ENCODE measurements at regions of chr2 and their contacts with region 1.

Region 1: GRCh38 chr2:99337113-99338028 is at the start of gene EIF5B:
- H3K4me3 ChIP-seq: peak within 1 kb of the TSS; percentile 87
- H3K27ac ChIP-seq: peak within 1 kb of the TSS; percentile 78
- H3K4me1 ChIP-seq: peaks cover 9% of the 10 kb centered on the region
- CTCF ChIP-seq: peak; percentile 90

Region 2: GRCh38 chr2:99154643-99155536 is 182.5 kb before region 1 on chr2 and contains the starts of genes LIPT1 and TSGA10:
- CTCF ChIA-PET with region 1: interaction called, 4 read pairs
- POLR2A ChIA-PET with region 1: interaction called, 12 read pairs
- H3K4me3 ChIP-seq: peak within 1 kb of the TSS; percentile 63
- H3K27ac ChIP-seq: peak within 1 kb of the TSS; percentile 71
- H3K4me1 ChIP-seq: peaks cover 3% of the 10 kb centered on the region; the same call in 1 of the 2 replicates
- CTCF ChIP-seq: peak; percentile 79

Region 3: DNA sequence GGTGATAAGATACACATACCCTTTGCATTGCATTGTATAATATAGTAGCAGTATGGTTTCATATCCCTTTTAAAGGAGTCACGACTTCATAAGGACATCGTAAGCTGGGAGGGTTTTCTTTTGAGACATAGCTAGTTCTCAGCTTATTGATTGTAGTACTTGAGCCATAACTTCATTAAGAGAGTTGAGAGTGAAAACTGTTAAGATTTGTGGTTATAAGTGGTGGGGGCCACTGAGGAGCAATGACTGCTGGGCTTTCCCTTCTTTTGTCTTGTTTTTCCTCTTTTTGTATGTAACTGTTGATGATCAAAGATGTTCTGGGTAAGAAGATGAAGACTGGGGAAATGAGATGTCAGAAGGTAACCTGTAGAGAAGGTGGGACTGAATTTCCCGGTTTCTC is 10.8 kb after region 1 on chr2:
- CTCF ChIA-PET with region 1: interaction called, 5 read pairs
- POLR2A ChIA-PET with region 1: interaction called, 10 read pairs
- H3K4me3 ChIP-seq: no peak overlapping the region
- H3K27ac ChIP-seq: no peak overlapping the region
- H3K4me1 ChIP-seq: no peaks in the 10 kb centered on the region
- CTCF ChIP-seq: no peak

Region 4: DNA sequence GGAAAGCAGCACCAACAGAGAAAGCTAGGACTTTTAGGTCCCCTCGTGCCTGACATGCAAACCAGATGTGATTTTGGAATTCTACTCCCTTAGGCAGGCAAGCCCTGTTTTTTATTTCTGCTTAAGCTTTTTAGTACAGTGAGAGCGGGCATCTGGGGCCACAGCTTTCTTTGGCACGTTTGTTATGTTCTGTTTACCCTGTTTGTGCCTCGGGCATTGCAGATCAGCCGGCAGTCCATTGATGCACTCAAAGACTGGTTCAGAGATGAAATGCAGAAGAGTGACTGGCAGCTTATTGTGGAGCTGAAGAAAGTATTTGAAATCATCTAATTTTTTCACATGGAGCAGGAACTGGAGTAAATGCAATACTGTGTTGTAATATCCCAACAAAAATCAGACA is 61.7 kb after region 1 on chr2:
- CTCF ChIA-PET with region 1: interaction called, 3 read pairs
- POLR2A ChIA-PET with region 1: interaction called, 12 read pairs
- H3K4me3 ChIP-seq: no peak overlapping the region
- H3K27ac ChIP-seq: no peak overlapping the region
- H3K4me1 ChIP-seq: no peaks in the 10 kb centered on the region
- CTCF ChIP-seq: no peak